SK-N-SH (cell line): ENCODE measurements at regions of chr1 and their contacts with region 1.

Region 1: DNA sequence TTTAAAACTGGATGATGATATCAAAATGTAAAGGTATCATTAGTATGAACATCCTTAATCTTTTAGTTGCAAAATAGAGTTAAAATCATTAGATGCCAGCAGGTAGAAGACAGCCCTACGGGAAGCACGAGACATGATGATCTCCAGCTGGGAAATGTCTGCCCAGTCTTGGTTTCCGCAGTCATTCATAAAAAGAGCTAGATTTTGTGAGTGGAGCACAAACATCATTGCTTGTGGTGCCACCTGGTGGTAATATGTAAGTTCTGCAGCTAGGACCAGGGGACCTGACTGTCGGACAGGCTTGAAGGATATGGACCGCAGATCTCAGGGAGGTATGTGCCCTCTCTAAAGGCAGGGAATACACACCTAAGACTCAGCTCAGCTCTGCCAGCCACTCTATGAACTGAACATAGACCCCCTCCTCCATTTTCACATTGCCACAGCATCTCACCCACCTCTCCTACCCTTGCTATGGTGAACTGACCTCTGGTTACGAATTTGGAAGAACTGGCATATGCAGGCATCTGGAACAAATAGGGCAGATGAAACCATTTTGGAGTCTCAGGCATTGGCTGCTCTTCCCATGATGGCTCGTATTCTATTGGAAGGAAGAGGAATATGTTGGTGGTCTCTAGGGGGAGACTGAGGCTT is 9.2 kb downstream of the FCMR start:
- DNase-seq: peak; percentile 81
- H3K4me3 ChIP-seq: no peak overlapping the region; a peak in 1 of 4 replicates
- H3K27ac ChIP-seq: no peak overlapping the region
- H3K4me1 ChIP-seq: peaks cover 0 to 10% of the 10 kb centered on the region in 2 experiments; a peak in 1 of 4 replicates
- H3K27me3 ChIP-seq: peaks cover 43% of the 10 kb centered on the region
- CTCF ChIP-seq: peak; percentile 81
- EP300 ChIP-seq: no peak
- RAD21 ChIP-seq: peak; percentile 92

Region 2: DNA sequence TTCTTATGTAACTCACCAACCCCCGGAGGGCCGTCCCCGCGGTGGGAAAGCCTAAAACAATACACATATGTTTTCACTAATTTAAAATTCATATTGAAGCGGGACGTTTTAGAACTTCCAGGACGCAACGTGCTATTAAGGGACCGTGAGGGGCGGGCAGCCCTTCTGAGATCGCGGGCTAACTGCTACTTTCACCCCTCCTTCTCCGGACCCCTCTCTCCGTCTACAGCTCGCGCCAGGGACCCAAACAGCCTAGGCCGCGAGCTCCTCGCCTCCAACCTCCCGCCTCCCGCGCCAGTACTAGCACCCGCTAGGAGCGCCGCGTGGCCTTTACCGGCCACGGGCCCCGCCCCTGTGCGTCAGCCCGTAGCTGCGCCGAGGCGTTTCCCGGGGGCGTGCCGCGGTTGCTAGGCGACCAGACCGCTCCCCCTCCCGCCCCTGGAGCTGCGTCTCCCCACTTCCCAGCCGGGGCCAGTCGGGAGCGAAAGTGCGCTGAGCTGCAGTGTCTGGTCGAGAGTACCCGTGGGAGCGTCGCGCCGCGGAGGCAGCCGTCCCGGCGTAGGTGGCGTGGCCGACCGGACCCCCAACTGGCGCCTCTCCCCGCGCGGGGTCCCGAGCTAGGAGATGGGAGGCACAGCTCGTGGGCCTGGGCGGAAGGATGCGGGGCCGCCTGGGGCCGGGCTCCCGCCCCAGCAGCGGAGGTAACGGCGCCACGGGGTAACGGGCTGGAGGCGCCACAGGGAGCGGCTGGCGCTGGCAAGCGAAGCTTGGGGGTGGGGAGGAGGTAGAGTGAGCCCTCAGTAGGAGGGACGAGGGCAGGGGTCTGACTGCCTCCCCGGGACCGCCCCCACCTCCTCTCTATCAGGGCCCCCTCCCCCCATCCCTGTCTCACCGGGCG is 277.2 kb before region 1 on chr1 and contains the start of gene DYRK3:
- CTCF ChIA-PET with region 1: interaction called, 30 read pairs
- POLR2A ChIA-PET with region 1: interaction called, 3 read pairs
- DNase-seq: peak; percentile 97
- H3K4me3 ChIP-seq: peak within 1 kb of the TSS; percentile 87 to 92
- H3K27ac ChIP-seq: peak within 1 kb of the TSS; percentile 79 to 83
- H3K4me1 ChIP-seq: peaks cover 18 to 22% of the 10 kb centered on the region in 2 experiments; a peak in 3 of 4 replicates
- H3K27me3 ChIP-seq: no peaks in the 10 kb centered on the region
- CTCF ChIP-seq: no peak
- EP300 ChIP-seq: no peak; a peak in 1 of 4 replicates
- RAD21 ChIP-seq: no peak
- polyA plus RNA-seq, gene DYRK3: 3.6 and 5.8 TPM in 2 replicates

Region 3: GRCh38 chr1:206716870-206717673 is 195.5 kb before region 1 on chr1:
- CTCF ChIA-PET with region 1: interaction called, 18 read pairs
- POLR2A ChIA-PET with region 1: no interaction called
- DNase-seq: no peak
- H3K4me3 ChIP-seq: no peak overlapping the region
- H3K27ac ChIP-seq: no peak overlapping the region
- H3K4me1 ChIP-seq: peaks cover 9 to 11% of the 10 kb centered on the region in 2 experiments; a peak in 2 of 4 replicates
- H3K27me3 ChIP-seq: no peaks in the 10 kb centered on the region
- CTCF ChIP-seq: no peak
- EP300 ChIP-seq: no peak
- RAD21 ChIP-seq: no peak

Region 4: GRCh38 chr1:206761159-206761768 is 151.3 kb before region 1 on chr1:
- CTCF ChIA-PET with region 1: interaction called, 21 read pairs
- POLR2A ChIA-PET with region 1: no interaction called
- DNase-seq: peak; percentile 59
- H3K4me3 ChIP-seq: no peak overlapping the region
- H3K27ac ChIP-seq: no peak overlapping the region
- H3K4me1 ChIP-seq: peaks cover 0 to 7% of the 10 kb centered on the region in 2 experiments; a peak in 2 of 4 replicates
- H3K27me3 ChIP-seq: no peaks in the 10 kb centered on the region; the same call in 1 of the 2 replicates
- CTCF ChIP-seq: peak; percentile 32; the same call in 1 of the 2 replicates
- EP300 ChIP-seq: peak in 1 of 2 experiments; percentile 54; a peak in 2 of 4 replicates
- RAD21 ChIP-seq: peak; percentile 36; the same call in 1 of the 2 replicates

Region 5: DNA sequence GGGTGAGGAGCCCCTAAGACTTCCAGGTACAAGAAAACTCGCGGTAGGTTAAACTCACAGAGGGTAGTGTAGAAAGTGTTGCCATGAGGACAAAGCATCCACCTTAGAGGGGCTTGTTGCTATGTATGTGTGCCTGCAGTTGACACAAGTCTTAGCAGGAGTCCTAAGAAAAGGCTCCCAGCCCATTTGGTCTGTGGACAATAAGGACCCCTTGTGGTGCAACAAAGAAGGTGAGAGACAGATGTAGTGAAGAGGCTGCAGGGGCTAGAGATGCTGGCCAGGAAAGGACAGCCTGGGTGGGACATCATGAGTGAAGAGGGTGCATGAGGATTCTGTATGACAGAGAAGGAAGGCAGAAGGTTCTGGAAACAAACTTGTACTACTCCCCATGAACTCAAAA is 104.0 kb before region 1 on chr1:
- CTCF ChIA-PET with region 1: interaction called, 23 read pairs
- POLR2A ChIA-PET with region 1: no interaction called
- DNase-seq: no peak
- H3K4me3 ChIP-seq: no peak overlapping the region
- H3K27ac ChIP-seq: no peak overlapping the region
- H3K4me1 ChIP-seq: peaks cover 0 to 22% of the 10 kb centered on the region in 2 experiments; a peak in 2 of 4 replicates
- H3K27me3 ChIP-seq: peaks cover 9% of the 10 kb centered on the region; the same call in 1 of the 2 replicates
- CTCF ChIP-seq: peak; percentile 33; the same call in 1 of the 2 replicates
- EP300 ChIP-seq: no peak
- RAD21 ChIP-seq: peak; percentile 56

Region 6: GRCh38 chr1:206925106-206925736 is 12.7 kb after region 1 on chr1:
- CTCF ChIA-PET with region 1: interaction called, 27 read pairs
- POLR2A ChIA-PET with region 1: no interaction called
- DNase-seq: no peak
- H3K4me3 ChIP-seq: no peak overlapping the region
- H3K27ac ChIP-seq: no peak overlapping the region
- H3K4me1 ChIP-seq: no peaks in the 10 kb centered on the region
- H3K27me3 ChIP-seq: no peaks in the 10 kb centered on the region
- CTCF ChIP-seq: no peak
- EP300 ChIP-seq: no peak
- RAD21 ChIP-seq: no peak